ENCODE measurements at regions of chr12 and their contacts with region 1.

Region 1: GRCh38 chr12:47079468-47079980 is at the starts of genes AMIGO2 and PCED1B:
- DNase-seq: peak; percentile 41 to 89 (median 63)
- ATAC-seq: peak; percentile 90
- H3K4me3 ChIP-seq: peak within 1 kb of the TSS; percentile 53
- H3K27ac ChIP-seq: peak within 1 kb of the TSS; percentile 54
- H3K4me1 ChIP-seq: peaks cover 13 to 19% of the 10 kb centered on the region in 2 experiments
- H3K27me3 ChIP-seq: no peaks in the 10 kb centered on the region; a peak in 1 of 5 replicates
- CTCF ChIP-seq: peak; percentile 69 to 84 (median 72)
- EP300 ChIP-seq: no peak; the same call in 1 of the 2 replicates
- POLR2A ChIP-seq: no peak; the same call in 1 of the 2 replicates
- RAD21 ChIP-seq: peak; percentile 82 to 88
- polyA plus RNA-seq, gene AMIGO2: 2.0 to 4.1 TPM
- polyA plus RNA-seq, gene PCED1B: 1.2 to 1.5 TPM

Region 2: DNA sequence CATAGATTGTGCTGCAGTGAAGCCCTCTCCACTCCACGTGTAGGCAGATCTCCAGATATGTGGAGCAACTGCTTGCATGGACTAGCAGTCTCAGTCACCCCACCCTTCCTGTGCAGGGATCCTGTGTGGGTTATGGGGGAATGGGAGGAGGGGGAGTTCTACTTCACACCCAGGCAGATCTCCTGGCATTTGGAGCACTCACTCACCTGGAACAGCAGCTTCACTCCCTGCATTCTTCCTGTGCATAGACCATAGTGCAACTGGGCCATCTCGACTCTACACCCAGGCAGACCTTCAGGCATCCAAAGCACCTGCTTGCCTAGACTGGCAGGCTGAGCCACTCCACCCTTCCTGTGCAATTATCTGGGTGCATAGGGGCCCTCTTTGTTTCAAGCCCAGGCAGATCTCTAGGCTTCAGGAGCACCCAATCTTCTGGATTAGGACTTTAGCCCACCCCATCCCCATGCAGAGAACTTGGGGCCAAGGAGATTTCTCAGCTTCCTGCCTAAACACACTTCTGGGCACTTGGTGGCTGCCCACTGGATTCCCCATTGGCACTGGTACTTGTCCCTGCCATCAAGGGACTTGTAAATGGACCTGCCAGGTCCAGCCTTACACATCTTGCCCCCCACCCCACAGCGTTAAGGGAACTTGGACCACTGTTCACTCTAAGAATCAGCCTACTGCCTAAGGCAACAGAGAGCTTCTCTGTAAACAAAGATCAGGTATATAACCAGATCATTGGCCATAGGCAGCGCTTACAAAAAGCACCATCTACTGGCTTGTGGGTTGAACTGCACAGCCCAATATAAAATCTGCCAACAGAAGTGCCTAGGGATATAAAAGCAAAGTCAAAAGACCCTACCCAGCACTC is 95.9 kb before region 1 on chr12:
- CTCF ChIA-PET with region 1: no interaction called
- POLR2A ChIA-PET with region 1: no interaction called
- in situ Hi-C with region 1: no loop called
- intact Hi-C with region 1: no loop called
- DNase-seq: peak in 2 of 4 experiments; percentile 17 to 41
- ATAC-seq: peak; percentile 86
- H3K4me3 ChIP-seq: no peak overlapping the region
- H3K27ac ChIP-seq: no peak overlapping the region
- H3K4me1 ChIP-seq: no peaks in the 10 kb centered on the region
- H3K27me3 ChIP-seq: no peaks in the 10 kb centered on the region; a peak in 1 of 5 replicates
- CTCF ChIP-seq: peak; percentile 56 to 83 (median 72)
- EP300 ChIP-seq: no peak
- POLR2A ChIP-seq: no peak
- RAD21 ChIP-seq: peak; percentile 73 to 83

Region 3: GRCh38 chr12:47164724-47165439 is 85.4 kb after region 1 on chr12:
- CTCF ChIA-PET with region 1: no interaction called
- POLR2A ChIA-PET with region 1: interaction called, 4 read pairs
- in situ Hi-C with region 1: no loop called
- intact Hi-C with region 1: loop called (anchors 5 kb)
- DNase-seq: no peak
- ATAC-seq: peak; percentile 75
- H3K4me3 ChIP-seq: no peak overlapping the region
- H3K27ac ChIP-seq: no peak overlapping the region
- H3K4me1 ChIP-seq: peaks cover 0 to 10% of the 10 kb centered on the region in 2 experiments; a peak in 4 of 5 replicates
- H3K27me3 ChIP-seq: no peaks in the 10 kb centered on the region
- CTCF ChIP-seq: no peak
- EP300 ChIP-seq: no peak
- POLR2A ChIP-seq: no peak
- RAD21 ChIP-seq: peak in 1 of 2 experiments; percentile 19; a peak in 1 of 4 replicates

Region 4: GRCh38 chr12:47190271-47190750 is 110.8 kb after region 1 on chr12:
- CTCF ChIA-PET with region 1: no interaction called
- POLR2A ChIA-PET with region 1: interaction called, 3 read pairs
- in situ Hi-C with region 1: no loop called
- intact Hi-C with region 1: loop called (anchors 5 kb)
- DNase-seq: no peak
- ATAC-seq: no peak
- H3K4me3 ChIP-seq: no peak overlapping the region
- H3K27ac ChIP-seq: no peak overlapping the region
- H3K4me1 ChIP-seq: peaks cover 3 to 49% of the 10 kb centered on the region in 2 experiments; a peak in 4 of 5 replicates
- H3K27me3 ChIP-seq: no peaks in the 10 kb centered on the region
- CTCF ChIP-seq: 0 out of 6 replicates have a peak, but pooled peaks of 1 of the 3 experiments have one; percentile 5
- EP300 ChIP-seq: no peak
- POLR2A ChIP-seq: no peak
- RAD21 ChIP-seq: peak in 1 of 2 experiments; percentile 31; a peak in 1 of 4 replicates

Region 5: DNA sequence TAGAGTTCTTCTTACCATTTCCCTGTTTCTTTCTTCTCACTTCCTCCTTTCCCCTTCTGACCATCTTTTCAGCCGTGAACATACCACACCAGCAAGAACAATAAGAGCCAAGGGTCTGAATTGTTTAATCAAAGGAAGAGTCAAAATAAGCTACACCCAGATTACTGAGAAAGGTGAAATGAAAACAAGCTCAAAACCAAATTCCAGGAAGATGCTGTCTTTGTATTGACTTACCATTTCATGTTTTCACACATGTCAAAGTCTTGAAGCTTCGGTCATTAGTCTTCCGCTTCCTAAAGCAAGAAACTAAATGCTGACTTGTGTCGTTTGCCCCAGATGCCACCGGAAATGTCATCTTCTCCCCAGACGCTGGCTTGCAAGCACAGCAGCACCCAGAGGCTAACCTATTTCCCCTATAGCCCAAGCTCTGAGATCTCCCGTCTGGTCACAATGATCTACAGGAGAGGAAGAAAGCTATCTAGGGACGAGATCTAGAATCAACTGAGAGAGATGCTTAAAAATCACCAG is 136.7 kb after region 1 on chr12:
- CTCF ChIA-PET with region 1: interaction called, 4 read pairs
- POLR2A ChIA-PET with region 1: no interaction called
- in situ Hi-C with region 1: no loop called
- intact Hi-C with region 1: loop called (anchors 2 kb)
- DNase-seq: peak in 1 of 4 experiments; percentile 53
- ATAC-seq: peak; percentile 25
- H3K4me3 ChIP-seq: no peak overlapping the region
- H3K27ac ChIP-seq: peak overlapping the region; percentile 81
- H3K4me1 ChIP-seq: peaks cover 3 to 20% of the 10 kb centered on the region in 2 experiments; a peak in 4 of 5 replicates
- H3K27me3 ChIP-seq: no peaks in the 10 kb centered on the region
- CTCF ChIP-seq: no peak
- EP300 ChIP-seq: no peak
- POLR2A ChIP-seq: no peak
- RAD21 ChIP-seq: no peak

Region 6: GRCh38 chr12:47307680-47308399 is 228.3 kb after region 1 on chr12:
- CTCF ChIA-PET with region 1: no interaction called
- POLR2A ChIA-PET with region 1: no interaction called
- in situ Hi-C with region 1: no loop called
- intact Hi-C with region 1: loop called (anchors 2 kb)
- DNase-seq: peak; percentile 13 to 70 (median 35)
- ATAC-seq: peak; percentile 95
- H3K4me3 ChIP-seq: no peak overlapping the region
- H3K27ac ChIP-seq: no peak overlapping the region
- H3K4me1 ChIP-seq: peaks cover 0 to 4% of the 10 kb centered on the region in 2 experiments; a peak in 2 of 5 replicates
- H3K27me3 ChIP-seq: no peaks in the 10 kb centered on the region
- CTCF ChIP-seq: peak; percentile 64 to 71 (median 70)
- EP300 ChIP-seq: no peak
- POLR2A ChIP-seq: no peak
- RAD21 ChIP-seq: peak; percentile 59 to 96

Region 7: DNA sequence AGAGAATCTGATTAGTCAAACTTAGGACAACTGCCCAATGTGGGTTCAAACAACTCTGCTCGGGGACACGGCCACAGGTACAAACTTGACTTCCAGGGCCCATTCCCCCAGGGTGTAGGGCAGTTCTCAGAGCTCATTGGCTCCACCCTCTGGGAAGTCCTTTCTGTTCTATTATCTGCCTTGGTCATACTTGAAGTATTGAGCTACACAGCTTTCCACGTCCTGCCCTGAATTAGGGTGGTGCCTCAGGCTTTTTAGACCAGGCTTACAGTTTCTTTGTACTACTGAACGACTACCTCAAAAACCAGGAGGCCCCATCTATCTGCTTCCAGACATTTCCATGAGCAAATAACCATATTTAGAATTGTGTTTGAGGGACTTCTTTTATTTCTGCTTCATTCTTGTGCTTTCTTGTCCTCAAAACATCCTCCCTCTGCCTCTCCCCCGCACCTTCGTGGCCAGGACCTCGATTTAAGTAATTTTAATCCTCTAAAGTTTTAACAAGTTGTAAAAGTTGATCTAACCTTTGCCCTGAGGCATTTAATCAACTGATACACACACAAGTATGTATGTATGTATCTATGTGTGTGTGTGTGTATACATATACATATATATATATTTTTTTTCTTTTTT is 282.0 kb after region 1 on chr12:
- CTCF ChIA-PET with region 1: interaction called, 3 read pairs
- POLR2A ChIA-PET with region 1: no interaction called
- in situ Hi-C with region 1: no loop called
- intact Hi-C with region 1: loop called (anchors 5 kb)
- DNase-seq: peak; percentile 36 to 85 (median 54)
- ATAC-seq: peak; percentile 98
- H3K4me3 ChIP-seq: peak overlapping the region; percentile 31
- H3K27ac ChIP-seq: peak overlapping the region; percentile 67
- H3K4me1 ChIP-seq: peaks cover 0 to 36% of the 10 kb centered on the region in 2 experiments; a peak in 4 of 5 replicates
- H3K27me3 ChIP-seq: no peaks in the 10 kb centered on the region
- CTCF ChIP-seq: peak in 2 of 3 experiments; percentile 31 to 50; a peak in 3 of 6 replicates
- EP300 ChIP-seq: peak; percentile 34; the same call in 1 of the 2 replicates
- POLR2A ChIP-seq: peak; percentile 53
- RAD21 ChIP-seq: peak; percentile 47 to 64

Region 8: DNA sequence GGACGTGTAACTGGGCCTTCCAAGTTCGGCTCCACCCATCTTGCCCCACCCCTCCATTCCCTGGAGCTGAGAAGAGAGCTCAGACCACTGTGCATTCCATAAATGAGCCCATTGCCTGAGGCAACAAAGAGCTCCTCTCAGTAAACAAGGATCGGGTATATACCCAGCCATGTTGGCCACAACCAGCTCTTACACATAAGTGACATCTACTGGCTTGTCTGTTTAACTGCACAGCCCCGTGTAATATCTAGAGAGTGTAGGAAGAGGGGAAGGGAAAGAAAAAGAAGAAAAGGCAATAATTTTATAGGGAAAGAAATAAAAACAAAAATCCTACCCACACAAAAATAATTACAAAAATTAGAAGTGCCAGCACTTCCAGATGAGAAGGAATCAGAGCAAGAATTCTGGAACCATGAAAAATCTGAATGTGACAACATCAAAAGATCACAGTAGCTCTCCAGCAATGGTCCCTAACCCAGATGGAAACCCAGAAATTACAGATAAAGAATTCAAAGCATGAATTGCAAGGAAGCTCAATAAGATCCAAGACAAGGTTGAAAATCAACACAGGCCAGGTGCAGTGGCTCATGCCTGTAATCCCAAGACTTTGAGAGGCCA is 318.2 kb after region 1 on chr12:
- CTCF ChIA-PET with region 1: interaction called, 4 read pairs
- POLR2A ChIA-PET with region 1: no interaction called
- in situ Hi-C with region 1: no loop called
- intact Hi-C with region 1: loop called (anchors 5 kb)
- DNase-seq: peak in 2 of 4 experiments; percentile 32 to 57
- ATAC-seq: peak; percentile 95
- H3K4me3 ChIP-seq: no peak overlapping the region
- H3K27ac ChIP-seq: no peak overlapping the region
- H3K4me1 ChIP-seq: peaks cover 0 to 8% of the 10 kb centered on the region in 2 experiments; a peak in 1 of 5 replicates
- H3K27me3 ChIP-seq: no peaks in the 10 kb centered on the region
- CTCF ChIP-seq: peak; percentile 46 to 71 (median 56); a peak in 5 of 6 replicates
- EP300 ChIP-seq: no peak
- POLR2A ChIP-seq: no peak
- RAD21 ChIP-seq: peak; percentile 65 to 86